ENCODE measurements at regions of chr6 and their contacts with region 1.

Region 1: DNA sequence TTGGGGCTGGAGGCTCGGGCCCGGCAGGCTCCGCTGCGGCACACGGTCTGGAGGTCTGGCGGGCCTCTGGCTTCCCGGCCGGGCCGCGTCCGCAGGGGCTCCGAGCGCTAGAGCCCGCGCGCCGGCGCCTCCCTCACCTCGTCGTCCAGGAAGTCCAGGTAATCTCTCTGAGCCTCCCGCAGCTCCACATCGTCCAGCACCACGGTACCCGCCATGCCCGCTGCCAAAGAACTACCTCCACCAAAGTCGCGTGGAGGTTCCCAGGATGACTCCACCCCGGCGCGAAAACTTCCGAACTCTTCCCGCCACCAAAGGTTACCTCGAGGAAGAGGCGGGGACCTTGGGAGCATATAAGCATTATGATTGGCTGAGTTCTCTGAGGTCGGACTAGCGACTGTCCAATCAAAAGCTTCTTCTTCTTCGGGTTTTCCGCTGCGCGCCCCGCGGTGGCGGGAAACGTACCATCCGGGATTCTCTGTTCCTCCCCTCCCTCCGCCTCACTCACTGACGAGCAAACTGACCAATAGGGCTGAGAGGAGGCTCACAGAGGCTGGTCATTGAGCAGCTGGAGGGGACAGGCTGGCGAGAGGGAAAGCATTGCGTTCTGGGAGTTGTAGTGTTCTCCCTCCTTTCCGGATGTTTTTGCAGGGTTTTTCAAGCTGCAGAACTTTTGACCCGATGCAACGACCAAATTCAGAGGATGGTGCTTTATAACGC is at the start of gene MCM3:
- DNase-seq: peak; percentile 92 to 99
- ATAC-seq: peak; percentile 97 to 100 (median 97)
- H3K4me3 ChIP-seq: peak within 1 kb of the TSS; percentile 70
- H3K4me3 Mint-ChIP-seq: peak within 1 kb of the TSS; percentile 4
- H3K27ac ChIP-seq: peak within 1 kb of the TSS; percentile 61
- H3K27ac Mint-ChIP-seq: no peak within 1 kb of the TSS
- H3K4me1 ChIP-seq: peaks cover 11% of the 10 kb centered on the region
- H3K4me1 Mint-ChIP-seq: peaks cover 31 to 33% of the 10 kb centered on the region in 2 donors
- H3K27me3 ChIP-seq: no peaks in the 10 kb centered on the region
- H3K27me3 Mint-ChIP-seq: no peaks in the 10 kb centered on the region
- CTCF ChIP-seq: no peak
- total RNA-seq, gene MCM3: 26.4 to 46.2 (median 31.5) TPM

Region 2: DNA sequence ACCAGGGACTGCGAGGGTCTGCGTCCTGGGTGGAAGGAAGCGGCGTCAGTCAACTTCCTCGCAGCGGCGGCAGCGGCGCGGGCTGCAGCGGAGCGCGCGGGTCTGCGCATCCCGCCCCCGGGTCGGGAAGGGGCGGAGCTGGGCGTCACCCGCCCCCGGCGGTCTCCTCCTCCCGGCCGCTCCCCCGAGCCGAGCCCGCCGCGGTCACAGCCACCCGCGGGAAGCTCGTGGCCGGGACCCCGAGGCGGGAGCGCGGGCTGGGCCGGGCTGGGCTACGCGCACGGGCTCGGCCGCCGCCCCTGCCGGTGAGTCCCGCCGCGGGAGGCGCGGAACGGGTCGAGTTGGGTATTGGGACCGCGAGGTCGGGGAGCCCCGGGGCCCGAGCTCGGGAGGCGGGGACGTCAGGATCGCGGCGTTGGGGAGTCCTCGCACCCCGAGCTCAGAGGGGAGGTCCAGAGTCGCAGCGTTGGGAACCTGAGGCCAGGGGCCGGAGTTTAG is 77.4 kb after region 1 on chr6 and contains the start of gene PAQR8:
- intact Hi-C with region 1: loop called (anchors 2 kb)
- DNase-seq: peak; percentile 75 to 92
- ATAC-seq: peak; percentile 83 to 93 (median 88)
- H3K4me3 ChIP-seq: peak within 1 kb of the TSS; percentile 98
- H3K4me3 Mint-ChIP-seq: peak within 1 kb of the TSS; percentile 96
- H3K27ac ChIP-seq: peak within 1 kb of the TSS; percentile 94
- H3K27ac Mint-ChIP-seq: peak within 1 kb of the TSS; percentile 92
- H3K4me1 ChIP-seq: peaks cover 15% of the 10 kb centered on the region
- H3K4me1 Mint-ChIP-seq: peaks cover 26 to 31% of the 10 kb centered on the region in 2 donors
- H3K27me3 ChIP-seq: no peaks in the 10 kb centered on the region
- H3K27me3 Mint-ChIP-seq: no peaks in the 10 kb centered on the region
- CTCF ChIP-seq: no peak
- total RNA-seq, gene PAQR8: 2.4 to 5.0 (median 4.6) TPM

Region 3: DNA sequence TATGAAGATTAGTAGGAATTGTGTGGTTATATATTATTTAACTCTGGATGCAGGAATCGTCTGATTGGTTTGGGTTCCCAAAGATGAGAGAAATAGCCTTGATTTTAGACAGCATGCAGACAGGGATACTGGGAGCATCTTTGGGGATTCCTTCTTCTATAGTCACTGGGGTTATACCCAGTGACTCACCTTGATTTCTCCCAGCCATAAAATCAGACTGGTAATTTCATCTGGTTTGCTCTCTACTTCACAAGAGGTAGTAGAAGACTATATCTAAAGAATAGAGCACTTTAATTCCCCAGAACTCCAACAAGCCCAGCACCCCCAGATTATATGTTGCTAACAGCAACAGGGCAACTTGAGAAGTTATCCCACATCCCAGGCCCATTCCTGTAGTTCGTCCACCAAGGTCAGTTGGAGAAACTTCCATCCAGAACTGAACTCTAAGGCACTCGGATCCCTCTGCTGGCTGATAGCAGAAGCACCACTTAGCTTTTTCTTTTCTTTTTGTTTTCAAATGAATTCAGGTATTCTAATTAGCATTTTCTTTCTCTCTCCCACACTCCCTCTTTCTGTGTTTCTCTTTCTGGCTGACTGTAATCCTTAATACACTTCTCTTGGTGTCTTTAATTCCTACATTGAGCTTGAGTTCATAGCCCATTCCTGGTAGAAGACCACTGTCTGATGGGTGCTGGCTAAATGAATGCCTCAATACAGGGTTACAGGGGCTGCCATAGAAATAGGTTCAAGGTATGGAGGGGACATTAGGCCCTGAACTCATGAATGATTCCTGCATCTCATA is 115.1 kb after region 1 on chr6:
- intact Hi-C with region 1: loop called (anchors 1 kb)
- DNase-seq: peak in 1 of 2 donors; percentile 77
- ATAC-seq: peak in 2 of 3 donors; percentile 65 to 75
- H3K4me3 ChIP-seq: no peak overlapping the region
- H3K4me3 Mint-ChIP-seq: peak overlapping the region; percentile 61
- H3K27ac ChIP-seq: no peak overlapping the region
- H3K27ac Mint-ChIP-seq: peak overlapping the region; percentile 21 to 84
- H3K4me1 ChIP-seq: peaks cover 25% of the 10 kb centered on the region
- H3K4me1 Mint-ChIP-seq: peaks cover 38 to 43% of the 10 kb centered on the region in 2 donors
- H3K27me3 ChIP-seq: no peaks in the 10 kb centered on the region
- H3K27me3 Mint-ChIP-seq: no peaks in the 10 kb centered on the region
- CTCF ChIP-seq: peak; percentile 80

Region 4: GRCh38 chr6:52557389-52558265 is 273.0 kb after region 1 on chr6:
- intact Hi-C with region 1: no loop called
- DNase-seq: no peak
- ATAC-seq: no peak
- H3K4me3 ChIP-seq: no peak overlapping the region
- H3K4me3 Mint-ChIP-seq: no peak overlapping the region
- H3K27ac ChIP-seq: no peak overlapping the region
- H3K27ac Mint-ChIP-seq: no peak overlapping the region
- H3K4me1 ChIP-seq: no peaks in the 10 kb centered on the region
- H3K4me1 Mint-ChIP-seq: peaks cover 45 to 53% of the 10 kb centered on the region in 2 donors
- H3K27me3 ChIP-seq: no peaks in the 10 kb centered on the region
- H3K27me3 Mint-ChIP-seq: no peaks in the 10 kb centered on the region
- CTCF ChIP-seq: no peak

Region 5: DNA sequence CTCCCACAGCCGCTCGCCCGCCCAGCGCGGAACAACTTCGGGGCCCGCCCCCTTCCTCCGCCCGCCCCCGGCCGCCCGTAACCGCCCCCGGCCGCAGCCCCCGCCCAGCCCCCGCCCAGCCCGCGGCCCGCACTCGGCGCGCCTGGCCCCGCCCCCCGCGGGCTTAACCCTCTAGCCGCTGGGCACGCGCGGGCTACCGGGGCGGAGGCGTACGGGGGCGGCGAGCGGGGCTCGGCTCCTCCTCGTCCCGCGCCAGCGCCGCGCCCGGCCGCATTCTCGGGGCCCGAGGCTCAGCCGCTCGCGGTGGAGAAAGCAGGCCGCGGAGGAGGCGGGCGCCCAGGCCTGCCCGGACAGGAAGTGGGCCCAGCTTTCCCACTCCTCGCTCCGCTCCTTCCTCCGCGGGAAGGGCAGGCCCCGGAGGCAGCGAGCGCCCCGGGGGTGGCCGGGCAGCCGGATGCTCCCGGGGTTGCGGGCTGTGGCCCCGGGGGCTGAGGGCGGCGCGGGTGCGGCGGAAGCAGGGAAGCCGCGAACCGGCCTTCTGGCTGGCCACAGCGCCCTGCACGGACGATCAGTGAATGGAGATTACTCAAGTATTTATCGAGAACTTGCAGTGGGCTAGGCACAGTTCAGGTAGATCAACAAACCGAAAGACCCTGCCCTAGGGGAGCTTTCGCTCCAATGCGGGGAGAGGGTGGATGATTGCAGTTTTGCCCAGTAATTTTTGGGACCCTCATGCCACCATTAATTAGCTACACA is 292.6 kb after region 1 on chr6 and contains the start of gene TRAM2:
- intact Hi-C with region 1: loop called (anchors 1 kb)
- DNase-seq: peak; percentile 74 to 89
- ATAC-seq: peak; percentile 70 to 87 (median 77)
- H3K4me3 ChIP-seq: peak within 1 kb of the TSS; percentile 65
- H3K4me3 Mint-ChIP-seq: peak within 1 kb of the TSS; percentile 89
- H3K27ac ChIP-seq: peak within 1 kb of the TSS; percentile 65
- H3K27ac Mint-ChIP-seq: peak within 1 kb of the TSS; percentile 87 to 91
- H3K4me1 ChIP-seq: peaks cover 40% of the 10 kb centered on the region
- H3K4me1 Mint-ChIP-seq: peaks cover 43 to 45% of the 10 kb centered on the region in 2 donors
- H3K27me3 ChIP-seq: no peaks in the 10 kb centered on the region
- H3K27me3 Mint-ChIP-seq: no peaks in the 10 kb centered on the region
- CTCF ChIP-seq: no peak
- total RNA-seq, gene TRAM2: 16.2 to 20.0 (median 19.2) TPM

Region 6: DNA sequence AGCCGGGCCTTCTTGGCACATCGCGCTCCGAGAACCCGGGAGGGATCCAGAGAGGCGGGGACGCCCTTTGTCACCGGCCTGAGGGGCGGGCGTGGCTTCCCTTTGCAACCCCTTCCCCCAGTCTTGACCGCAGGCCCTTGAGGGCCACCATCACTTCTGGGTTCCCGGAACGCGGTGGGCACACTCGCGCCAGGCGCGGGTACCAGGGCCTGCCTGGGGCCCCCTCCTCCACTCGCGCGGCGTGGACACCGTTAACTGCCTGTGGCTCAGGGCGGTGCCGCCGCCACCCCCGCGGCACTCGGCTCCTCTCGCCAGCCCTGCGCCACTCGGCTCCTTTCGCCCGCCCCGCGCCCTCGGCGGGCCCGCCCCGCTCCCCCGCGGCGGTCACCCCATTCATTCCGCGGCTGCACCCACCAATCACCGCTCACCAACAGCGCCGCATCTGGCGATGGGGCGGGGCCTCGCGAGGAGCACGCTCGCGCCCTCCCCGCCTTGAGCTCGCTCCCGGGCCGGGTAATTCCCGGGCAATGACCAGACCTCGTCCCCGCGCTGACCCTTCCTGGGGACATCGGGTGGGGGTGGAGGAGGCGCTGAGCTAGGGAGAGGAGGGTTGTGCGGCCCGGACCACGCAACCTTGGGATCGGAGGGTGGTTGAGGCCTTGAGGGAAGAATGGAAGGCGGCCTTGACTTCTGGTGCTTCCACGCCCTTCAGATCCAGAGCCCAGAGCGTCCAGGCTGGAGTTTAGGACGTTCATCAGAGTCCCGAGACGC is 1074.6 kb after region 1 on chr6:
- intact Hi-C with region 1: loop called (anchors 10 kb)
- DNase-seq: peak; percentile 92 to 94
- ATAC-seq: peak; percentile 87 to 96 (median 94)
- H3K4me3 ChIP-seq: peak overlapping the region; percentile 64
- H3K4me3 Mint-ChIP-seq: peak overlapping the region; percentile 93
- H3K27ac ChIP-seq: peak overlapping the region; percentile 95
- H3K27ac Mint-ChIP-seq: peak overlapping the region; percentile 97 to 99
- H3K4me1 ChIP-seq: peaks cover 29% of the 10 kb centered on the region
- H3K4me1 Mint-ChIP-seq: peaks cover 42 to 44% of the 10 kb centered on the region in 2 donors
- H3K27me3 ChIP-seq: no peaks in the 10 kb centered on the region
- H3K27me3 Mint-ChIP-seq: no peaks in the 10 kb centered on the region
- CTCF ChIP-seq: no peak

Measured in natural killer cell (primary cell).